ENCODE measurements at regions of chr4 and their contacts with region 1.

Region 1: GRCh38 chr4:158856852-158857251 is 88.0 kb downstream of the FNIP2 start:
- DNase-seq: no peak
- H3K4me3 ChIP-seq: no peak overlapping the region
- H3K27ac ChIP-seq: no peak overlapping the region
- H3K4me1 ChIP-seq: no peaks in the 10 kb centered on the region
- H3K27me3 ChIP-seq: no peaks in the 10 kb centered on the region
- CTCF ChIP-seq: peak in 2 of 3 experiments; percentile 46 to 53; a peak in 2 of 4 replicates
- EP300 ChIP-seq: no peak
- POLR2A ChIP-seq: no peak
- RAD21 ChIP-seq: peak; percentile 85 to 86

Region 2: GRCh38 chr4:158870626-158871334 is 13.9 kb after region 1 on chr4:
- CTCF ChIA-PET with region 1: interaction called, 19 read pairs
- POLR2A ChIA-PET with region 1: interaction called, 3 read pairs
- DNase-seq: peak; percentile 5 to 58
- H3K4me3 ChIP-seq: no peak overlapping the region
- H3K27ac ChIP-seq: no peak overlapping the region
- H3K4me1 ChIP-seq: peaks cover 0 to 10% (median 6%) of the 10 kb centered on the region in 4 experiments; a peak in 5 of 7 replicates
- H3K27me3 ChIP-seq: no peaks in the 10 kb centered on the region
- CTCF ChIP-seq: no peak
- EP300 ChIP-seq: no peak; a peak in 1 of 3 replicates
- POLR2A ChIP-seq: no peak
- RAD21 ChIP-seq: no peak

Region 3: DNA sequence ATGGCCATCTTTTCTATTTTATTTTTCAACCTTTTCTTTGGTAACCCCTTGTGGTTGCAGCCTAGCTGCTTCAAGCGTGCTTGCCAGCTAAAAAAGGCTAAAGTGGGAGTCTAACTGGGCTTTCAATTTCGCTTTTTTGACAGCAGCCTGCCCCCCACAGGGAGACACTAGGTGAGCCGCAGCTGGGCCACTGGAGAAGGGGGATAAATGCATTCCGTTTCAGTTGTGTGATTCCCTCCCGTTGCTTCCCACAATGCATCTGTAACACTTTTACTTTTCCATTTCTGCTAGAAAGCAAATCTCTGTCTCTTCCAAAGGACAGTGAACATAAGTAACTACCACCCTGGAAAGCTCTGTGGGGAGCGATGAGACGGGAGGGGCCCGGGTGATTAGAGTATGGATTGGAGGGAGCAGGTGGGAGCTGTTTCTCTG is 159.8 kb after region 1 on chr4:
- CTCF ChIA-PET with region 1: interaction called, 12 read pairs
- POLR2A ChIA-PET with region 1: no interaction called
- DNase-seq: peak in 1 of 2 experiments; percentile 66
- H3K4me3 ChIP-seq: no peak overlapping the region; a peak in 1 of 8 replicates
- H3K27ac ChIP-seq: no peak overlapping the region
- H3K4me1 ChIP-seq: peaks cover 0 to 8% (median 3%) of the 10 kb centered on the region in 4 experiments; a peak in 4 of 7 replicates
- H3K27me3 ChIP-seq: no peaks in the 10 kb centered on the region; a peak in 1 of 7 replicates
- CTCF ChIP-seq: peak in 1 of 3 experiments; percentile 27; a peak in 1 of 4 replicates
- EP300 ChIP-seq: no peak
- POLR2A ChIP-seq: no peak
- RAD21 ChIP-seq: peak; percentile 37 to 49; a peak in 3 of 4 replicates

Region 4: DNA sequence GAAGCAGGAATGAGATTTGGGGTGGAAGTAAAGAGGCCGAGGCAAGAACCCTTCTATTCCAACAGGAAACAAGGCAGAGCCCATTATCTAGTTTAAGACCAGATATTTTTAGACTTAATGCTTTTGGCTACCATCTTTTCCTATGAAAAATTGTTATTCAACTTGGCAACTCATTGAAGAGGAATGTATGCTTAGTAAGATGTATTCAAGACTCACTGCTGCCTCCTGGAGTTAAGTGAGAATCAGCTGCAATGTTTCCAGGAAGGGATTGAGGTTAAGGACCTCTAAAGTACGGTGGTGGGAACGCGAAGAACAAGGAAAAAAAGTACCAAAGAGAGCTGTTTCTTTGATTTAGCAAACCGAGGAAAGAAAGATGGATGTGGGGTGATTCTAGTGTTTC is 335.1 kb after region 1 on chr4:
- CTCF ChIA-PET with region 1: interaction called, 25 read pairs
- POLR2A ChIA-PET with region 1: interaction called, 3 read pairs
- DNase-seq: no peak
- H3K4me3 ChIP-seq: no peak overlapping the region
- H3K27ac ChIP-seq: no peak overlapping the region
- H3K4me1 ChIP-seq: no peaks in the 10 kb centered on the region; a peak in 1 of 7 replicates
- H3K27me3 ChIP-seq: no peaks in the 10 kb centered on the region
- CTCF ChIP-seq: peak in 2 of 3 experiments; percentile 61 to 71; a peak in 3 of 4 replicates
- EP300 ChIP-seq: no peak
- POLR2A ChIP-seq: no peak
- RAD21 ChIP-seq: peak; percentile 53 to 63; a peak in 3 of 4 replicates

Region 5: DNA sequence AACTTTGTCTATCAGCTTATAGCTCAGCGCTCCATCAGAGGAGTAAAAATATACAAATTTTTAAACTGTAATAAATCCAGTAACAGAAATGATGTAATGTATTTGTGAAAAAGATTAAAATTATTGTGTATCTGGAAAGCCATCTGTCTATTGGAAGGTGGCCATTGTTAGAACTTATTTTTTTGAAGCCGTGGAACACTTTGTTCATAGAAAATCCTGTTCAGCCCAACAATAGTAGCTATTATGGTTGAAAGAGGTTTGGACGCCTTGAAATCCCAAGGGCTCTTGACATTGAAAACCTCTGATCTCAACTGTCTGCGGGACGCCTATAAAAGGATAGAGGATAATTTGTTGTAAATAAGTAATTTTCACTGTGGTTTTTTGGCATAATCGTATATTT is 344.3 kb after region 1 on chr4:
- CTCF ChIA-PET with region 1: interaction called, 42 read pairs
- POLR2A ChIA-PET with region 1: no interaction called
- DNase-seq: no peak
- H3K4me3 ChIP-seq: no peak overlapping the region
- H3K27ac ChIP-seq: no peak overlapping the region
- H3K4me1 ChIP-seq: peaks cover 2 to 11% (median 6%) of the 10 kb centered on the region in 4 experiments; a peak in 6 of 7 replicates
- H3K27me3 ChIP-seq: peaks cover 0 to 1% (median 0%) of the 10 kb centered on the region in 4 experiments; a peak in 1 of 7 replicates
- CTCF ChIP-seq: no peak
- EP300 ChIP-seq: no peak
- POLR2A ChIP-seq: no peak
- RAD21 ChIP-seq: no peak

Measured in H1 (cell line).